Sigmoid colon (tissue), 7 donors: ENCODE measurements at regions of chr22 and their contacts with region 1.

Region 1: GRCh38 chr22:17638432-17639246 is at the start of gene BCL2L13:
- DNase-seq: peak; percentile 96
- H3K4me3 ChIP-seq: peak within 1 kb of the TSS; percentile 63 to 97 (median 79)
- H3K27ac ChIP-seq: peak within 1 kb of the TSS; percentile 93 to 99 (median 99)
- H3K4me1 ChIP-seq: peaks cover 0 to 27% (median 18%) of the 10 kb centered on the region in 4 donors
- H3K27me3 ChIP-seq: no peaks in the 10 kb centered on the region
- CTCF ChIP-seq: no peak
- EP300 ChIP-seq: peak in 1 of 4 donors; percentile 25
- POLR2A ChIP-seq: peak; percentile 96 to 97
- total RNA-seq, gene BCL2L13: 59.2 to 68.1 (median 66.8) TPM

Region 2: GRCh38 chr22:17665854-17666253 is 27.2 kb after region 1 on chr22:
- intact Hi-C with region 1: no loop called
- DNase-seq: no peak
- H3K4me3 ChIP-seq: no peak overlapping the region
- H3K27ac ChIP-seq: no peak overlapping the region
- H3K4me1 ChIP-seq: no peaks in the 10 kb centered on the region
- H3K27me3 ChIP-seq: no peaks in the 10 kb centered on the region
- CTCF ChIP-seq: no peak
- EP300 ChIP-seq: no peak
- POLR2A ChIP-seq: no peak

Region 3: GRCh38 chr22:17706018-17706900 is 67.6 kb after region 1 on chr22:
- intact Hi-C with region 1: loop called (anchors 5 kb)
- DNase-seq: peak; percentile 75
- H3K4me3 ChIP-seq: peak overlapping the region; percentile 24 to 47 (median 34)
- H3K27ac ChIP-seq: peak overlapping the region; percentile 76 to 84 (median 80)
- H3K4me1 ChIP-seq: peaks cover 0 to 27% (median 23%) of the 10 kb centered on the region in 4 donors
- H3K27me3 ChIP-seq: no peaks in the 10 kb centered on the region
- CTCF ChIP-seq: no peak
- EP300 ChIP-seq: peak in 1 of 4 donors; percentile 23
- POLR2A ChIP-seq: peak in 1 of 2 donors; percentile 47

Region 4: GRCh38 chr22:17717708-17718107 is 79.1 kb after region 1 on chr22:
- intact Hi-C with region 1: no loop called
- DNase-seq: no peak
- H3K4me3 ChIP-seq: no peak overlapping the region
- H3K27ac ChIP-seq: peak overlapping the region in 2 of 4 donors; percentile 39 to 75
- H3K4me1 ChIP-seq: peaks cover 0 to 19% (median 7%) of the 10 kb centered on the region in 4 donors
- H3K27me3 ChIP-seq: no peaks in the 10 kb centered on the region
- CTCF ChIP-seq: no peak
- EP300 ChIP-seq: no peak
- POLR2A ChIP-seq: no peak

Region 5: GRCh38 chr22:17876306-17876831 is 237.7 kb after region 1 on chr22:
- intact Hi-C with region 1: no loop called
- DNase-seq: no peak
- H3K4me3 ChIP-seq: no peak overlapping the region
- H3K27ac ChIP-seq: peak overlapping the region in 1 of 4 donors; percentile 21
- H3K4me1 ChIP-seq: peaks cover 0 to 5% (median 0%) of the 10 kb centered on the region in 4 donors
- H3K27me3 ChIP-seq: no peaks in the 10 kb centered on the region
- CTCF ChIP-seq: no peak
- EP300 ChIP-seq: no peak
- POLR2A ChIP-seq: no peak